ENCODE measurements at regions of chr3 and their contacts with region 1.

Region 1: GRCh38 chr3:183895296-183895695 is 10.6 kb upstream of the PARL start:
- DNase-seq: peak; percentile 65
- H3K4me3 ChIP-seq: no peak overlapping the region
- H3K27ac ChIP-seq: no peak overlapping the region
- H3K4me1 ChIP-seq: no peaks in the 10 kb centered on the region
- H3K27me3 ChIP-seq: no peaks in the 10 kb centered on the region
- CTCF ChIP-seq: peak; percentile 87

Region 2: GRCh38 chr3:184017672-184018423 is 122.6 kb after region 1 on chr3 and contains the start of gene ABCC5:
- CTCF ChIA-PET with region 1: interaction called, 4 read pairs
- POLR2A ChIA-PET with region 1: no interaction called
- intact Hi-C with region 1: loop called (anchors 5 kb)
- DNase-seq: peak; percentile 96
- H3K4me3 ChIP-seq: peak within 1 kb of the TSS; percentile 98
- H3K27ac ChIP-seq: peak within 1 kb of the TSS; percentile 56
- H3K4me1 ChIP-seq: peaks cover 10% of the 10 kb centered on the region
- H3K27me3 ChIP-seq: no peaks in the 10 kb centered on the region
- CTCF ChIP-seq: no peak
- total RNA-seq, gene ABCC5: 30.3 and 32.0 TPM in 2 replicates

Region 3: GRCh38 chr3:184085389-184085852 is 190.1 kb after region 1 on chr3:
- CTCF ChIA-PET with region 1: interaction called, 13 read pairs
- POLR2A ChIA-PET with region 1: no interaction called
- intact Hi-C with region 1: no loop called
- DNase-seq: peak; percentile 91
- H3K4me3 ChIP-seq: no peak overlapping the region
- H3K27ac ChIP-seq: peak overlapping the region; percentile 30
- H3K4me1 ChIP-seq: no peaks in the 10 kb centered on the region
- H3K27me3 ChIP-seq: no peaks in the 10 kb centered on the region
- CTCF ChIP-seq: no peak

Region 4: GRCh38 chr3:184117636-184118035 is 222.3 kb after region 1 on chr3:
- CTCF ChIA-PET with region 1: interaction called, 4 read pairs
- POLR2A ChIA-PET with region 1: no interaction called
- intact Hi-C with region 1: loop called (anchors 1 kb)
- DNase-seq: peak; percentile 65
- H3K4me3 ChIP-seq: no peak overlapping the region
- H3K27ac ChIP-seq: no peak overlapping the region
- H3K4me1 ChIP-seq: no peaks in the 10 kb centered on the region
- H3K27me3 ChIP-seq: peaks cover 6% of the 10 kb centered on the region
- CTCF ChIP-seq: peak; percentile 53

Region 5: GRCh38 chr3:184250167-184250828 is 355.0 kb after region 1 on chr3:
- CTCF ChIA-PET with region 1: interaction called, 5 read pairs
- POLR2A ChIA-PET with region 1: no interaction called
- intact Hi-C with region 1: loop called (anchors 2 kb)
- DNase-seq: peak; percentile 94
- H3K4me3 ChIP-seq: peak overlapping the region; percentile 84
- H3K27ac ChIP-seq: peak overlapping the region; percentile 40
- H3K4me1 ChIP-seq: no peaks in the 10 kb centered on the region
- H3K27me3 ChIP-seq: no peaks in the 10 kb centered on the region
- CTCF ChIP-seq: peak; percentile 91

Region 6: GRCh38 chr3:184289426-184289938 is 394.2 kb after region 1 on chr3:
- CTCF ChIA-PET with region 1: interaction called, 5 read pairs
- POLR2A ChIA-PET with region 1: no interaction called
- intact Hi-C with region 1: loop called (anchors 1 kb)
- DNase-seq: peak; percentile 69
- H3K4me3 ChIP-seq: no peak overlapping the region
- H3K27ac ChIP-seq: no peak overlapping the region
- H3K4me1 ChIP-seq: no peaks in the 10 kb centered on the region
- H3K27me3 ChIP-seq: no peaks in the 10 kb centered on the region
- CTCF ChIP-seq: peak; percentile 76

Region 7: DNA sequence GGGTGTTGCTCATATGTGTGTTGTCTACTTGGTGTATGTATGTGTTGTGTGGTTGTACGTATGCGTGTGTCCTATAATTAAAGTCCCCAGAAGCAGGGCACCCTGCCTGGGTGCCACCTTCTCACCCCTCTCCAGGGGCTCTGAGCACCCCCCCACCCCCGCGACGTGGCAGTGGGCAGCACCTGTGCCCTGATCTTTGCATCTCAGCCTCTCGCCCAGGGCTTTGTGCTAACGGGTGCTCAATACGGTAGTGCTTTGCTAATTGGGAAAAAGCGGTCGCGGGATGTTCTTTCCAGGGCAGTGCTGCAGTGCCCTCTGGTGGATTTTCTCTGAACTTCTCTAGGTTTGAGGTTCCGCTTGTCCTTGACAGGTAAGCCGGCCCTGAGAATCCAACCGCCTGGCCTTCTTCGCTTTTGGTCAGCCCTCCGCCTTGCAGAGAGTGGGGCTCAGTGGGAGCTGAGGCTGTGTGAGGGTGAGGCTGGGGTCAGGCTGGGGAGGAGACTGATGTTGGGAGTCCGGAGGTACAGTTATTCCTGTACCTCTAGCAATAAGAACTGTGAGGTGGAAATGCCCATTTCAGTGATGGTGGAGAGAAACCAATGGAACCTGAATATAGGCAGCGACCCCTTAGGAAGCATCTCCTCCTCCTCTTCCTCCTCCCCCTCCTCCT is 648.7 kb after region 1 on chr3:
- CTCF ChIA-PET with region 1: interaction called, 7 read pairs
- POLR2A ChIA-PET with region 1: no interaction called
- intact Hi-C with region 1: loop called (anchors 5 kb)
- DNase-seq: peak; percentile 87
- H3K4me3 ChIP-seq: no peak overlapping the region
- H3K27ac ChIP-seq: no peak overlapping the region
- H3K4me1 ChIP-seq: no peaks in the 10 kb centered on the region
- H3K27me3 ChIP-seq: peaks cover 4% of the 10 kb centered on the region
- CTCF ChIP-seq: peak; percentile 91

Measured in A673 (cell line).